Upper lobe of right lung (tissue), 1 donor: ENCODE measurements at regions of chr6 and their contacts with region 1.

Region 1: GRCh38 chr6:11366183-11366933 is 133.9 kb upstream of the NEDD9 start:
- DNase-seq: no peak
- ATAC-seq: peak; percentile 34
- H3K4me3 ChIP-seq: no peak overlapping the region
- H3K27ac ChIP-seq: peak overlapping the region; percentile 92
- H3K4me1 ChIP-seq: peaks cover 59% of the 10 kb centered on the region
- H3K27me3 ChIP-seq: no peaks in the 10 kb centered on the region
- CTCF ChIP-seq: no peak

Region 2: GRCh38 chr6:11202513-11203305 is 163.6 kb before region 1 on chr6:
- intact Hi-C with region 1: no loop called
- DNase-seq: no peak
- ATAC-seq: no peak
- H3K4me3 ChIP-seq: no peak overlapping the region
- H3K27ac ChIP-seq: peak overlapping the region; percentile 51
- H3K4me1 ChIP-seq: peaks cover 85% of the 10 kb centered on the region
- H3K27me3 ChIP-seq: no peaks in the 10 kb centered on the region
- CTCF ChIP-seq: no peak

Region 3: DNA sequence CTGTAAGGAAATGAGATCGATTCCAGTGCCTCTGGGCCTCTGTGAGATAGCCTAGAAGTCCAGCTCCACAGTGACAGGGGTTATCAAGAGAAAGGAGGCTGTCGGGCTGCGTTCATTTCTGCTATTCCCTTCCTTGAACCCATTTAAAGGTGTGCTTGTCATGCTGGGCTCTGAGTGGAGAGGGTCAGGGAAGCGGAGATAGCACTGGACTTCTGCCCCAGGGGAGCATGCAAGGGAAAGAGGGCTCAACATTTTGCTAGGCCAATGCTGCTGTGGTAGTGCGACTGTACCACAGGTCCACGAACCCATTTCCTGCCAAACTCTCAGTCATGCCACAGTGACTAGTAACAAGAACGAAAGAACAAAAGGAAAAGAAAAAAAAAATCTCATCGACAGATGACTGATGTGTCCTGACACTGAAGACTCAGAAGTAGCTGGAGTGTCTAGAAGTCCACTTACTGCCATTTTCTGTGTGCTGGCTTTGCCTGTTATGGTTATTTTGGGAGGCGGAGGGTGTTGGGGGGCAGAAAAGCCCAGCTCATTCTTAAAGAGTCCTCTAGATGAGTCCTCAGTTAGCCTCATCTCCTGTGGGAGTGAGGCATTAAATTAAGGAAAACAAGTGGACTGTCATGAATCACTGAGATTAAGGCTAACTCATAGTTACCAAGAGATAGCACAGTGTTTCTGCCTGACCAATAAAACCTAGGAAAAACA is 141.9 kb before region 1 on chr6:
- intact Hi-C with region 1: loop called (anchors 10 kb)
- DNase-seq: no peak
- ATAC-seq: peak; percentile 33
- H3K4me3 ChIP-seq: peak overlapping the region; percentile 9
- H3K27ac ChIP-seq: peak overlapping the region; percentile 94
- H3K4me1 ChIP-seq: peaks cover 80% of the 10 kb centered on the region
- H3K27me3 ChIP-seq: no peaks in the 10 kb centered on the region
- CTCF ChIP-seq: no peak